Astrocyte of the cerebellum (primary cell): ENCODE measurements at regions of chr10 and their contacts with region 1.

Region 1: DNA sequence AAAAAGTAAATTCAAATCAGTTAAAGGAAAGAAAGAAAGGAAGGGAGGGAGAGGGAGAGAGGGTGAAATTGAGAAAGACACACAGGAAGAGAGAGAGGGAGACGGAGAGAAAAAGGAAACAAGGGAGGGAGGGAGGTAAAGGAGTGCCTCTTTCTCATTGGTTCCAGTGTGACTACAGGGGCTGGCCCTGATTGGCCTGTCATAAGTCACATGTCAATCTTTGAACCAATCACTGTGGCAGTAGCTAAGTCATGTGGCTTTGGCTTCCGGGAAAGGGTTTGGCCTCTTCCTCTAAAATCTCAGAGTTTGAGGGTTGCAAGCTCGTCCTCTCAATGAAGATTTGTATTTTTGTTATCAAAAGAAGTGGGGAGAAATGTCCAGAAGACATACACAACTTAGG is 150.2 kb downstream of the RAB11FIP2 start:
- DNase-seq: no peak
- H3K4me3 ChIP-seq: no peak overlapping the region
- CTCF ChIP-seq: no peak

Region 2: DNA sequence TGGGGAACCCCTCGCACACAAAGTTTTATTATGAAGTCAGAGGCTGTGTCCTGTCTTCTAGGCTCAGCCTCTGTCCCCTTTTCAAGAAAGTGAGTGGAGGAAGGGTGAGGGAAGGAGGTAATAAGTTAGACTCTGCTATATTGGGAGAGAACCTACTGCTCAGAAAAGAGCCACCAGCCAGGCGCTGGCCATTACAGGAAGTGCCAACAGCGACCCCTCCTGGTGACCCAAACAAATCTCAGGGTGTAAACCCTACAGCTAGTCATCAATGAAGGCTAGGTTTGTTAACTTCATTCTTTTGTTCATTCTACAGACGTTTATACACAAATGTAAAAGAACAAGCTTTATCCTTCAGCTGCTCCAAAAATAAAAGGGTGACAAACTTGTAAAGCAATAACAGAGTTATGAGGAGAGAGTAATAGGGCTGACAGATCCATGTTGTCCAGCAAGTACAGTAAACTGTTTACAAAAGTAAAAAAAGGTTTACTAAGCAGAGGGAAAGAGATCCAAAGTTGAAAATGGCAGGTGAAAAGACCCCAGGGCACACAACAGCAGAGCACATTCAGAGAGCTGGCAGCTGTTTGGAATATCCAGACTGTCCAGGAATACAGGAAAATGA is 362.9 kb after region 1 on chr10:
- in situ Hi-C with region 1: loop called (anchors 10 kb)
- DNase-seq: no peak
- H3K4me3 ChIP-seq: no peak overlapping the region
- CTCF ChIP-seq: peak; percentile 52